Calu3 (cell line): ENCODE measurements at regions of chr2 and their contacts with region 1.

Region 1: GRCh38 chr2:174699993-174700766 is 64.1 kb downstream of the CHRNA1 start:
- DNase-seq: peak; percentile 28
- H3K4me3 Mint-ChIP-seq: no peak overlapping the region
- H3K27ac Mint-ChIP-seq: no peak overlapping the region
- H3K4me1 Mint-ChIP-seq: no peaks in the 10 kb centered on the region
- H3K27me3 Mint-ChIP-seq: peaks cover 60% of the 10 kb centered on the region
- CTCF ChIP-seq: peak; percentile 57

Region 2: DNA sequence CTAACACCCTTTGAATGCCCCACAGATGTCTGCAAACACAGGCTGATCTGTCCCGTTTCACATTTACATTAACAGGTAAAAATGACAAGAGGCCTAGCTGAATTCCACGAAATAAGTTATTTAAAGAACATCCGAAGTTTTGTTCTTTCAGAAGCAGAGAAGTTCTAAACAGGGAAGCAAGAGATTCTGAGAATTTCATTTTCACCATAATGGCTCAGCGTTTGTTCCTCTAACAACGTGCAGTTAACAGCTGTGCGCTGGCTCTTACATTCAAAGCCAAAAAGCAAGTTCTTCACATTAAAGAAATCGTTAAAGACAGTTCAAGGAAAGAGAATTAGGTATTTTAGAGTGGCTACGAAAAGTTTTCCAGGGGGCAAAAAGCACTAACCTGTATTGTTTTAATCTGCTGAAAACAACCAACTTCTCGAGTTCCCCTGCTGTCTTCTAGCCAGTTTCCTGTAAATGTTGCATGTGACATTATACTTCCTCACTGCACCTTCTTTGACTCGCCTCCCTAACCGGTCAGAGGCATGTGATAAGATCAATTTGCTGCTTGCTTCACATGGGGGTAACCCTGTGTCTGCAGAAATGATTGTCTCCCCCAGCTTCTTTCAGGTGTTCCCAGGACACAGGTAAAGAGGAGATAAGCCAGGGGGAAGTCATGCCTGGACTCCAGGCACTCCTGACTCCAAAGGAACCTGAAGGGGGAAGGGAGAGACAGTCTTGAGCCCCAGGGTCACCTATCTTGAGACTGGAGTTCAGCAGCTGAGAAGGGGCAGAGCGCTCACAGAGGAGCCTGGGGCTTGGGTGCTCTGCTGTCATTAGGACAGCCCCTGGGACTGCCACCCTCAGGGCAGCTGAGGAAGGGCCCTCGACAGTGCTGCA is 65.8 kb before region 1 on chr2:
- CTCF ChIA-PET with region 1: no interaction called
- intact Hi-C with region 1: no loop called
- DNase-seq: no peak
- H3K4me3 Mint-ChIP-seq: no peak overlapping the region
- H3K27ac Mint-ChIP-seq: no peak overlapping the region
- H3K4me1 Mint-ChIP-seq: no peaks in the 10 kb centered on the region
- H3K27me3 Mint-ChIP-seq: peaks cover 6% of the 10 kb centered on the region
- CTCF ChIP-seq: no peak

Region 3: DNA sequence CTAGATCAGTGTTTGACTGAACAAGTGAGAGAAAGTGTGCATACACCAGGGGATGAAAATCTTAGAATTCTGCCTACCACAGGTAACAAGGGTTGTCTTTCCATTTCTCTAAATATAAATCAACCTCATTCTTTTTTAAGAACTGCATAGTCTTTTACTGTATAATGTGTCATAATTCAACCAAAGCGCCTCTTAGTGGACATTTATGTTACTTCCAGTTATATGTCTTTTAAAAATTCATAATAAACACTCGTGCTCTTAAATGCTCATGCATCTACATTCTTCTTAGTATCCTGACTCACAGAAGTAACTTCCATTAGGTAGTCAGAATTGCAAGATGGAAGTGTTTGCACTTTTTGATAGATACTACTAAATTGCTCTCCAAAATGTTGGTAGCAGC is 12.1 kb before region 1 on chr2:
- CTCF ChIA-PET with region 1: interaction called, 10 read pairs
- intact Hi-C with region 1: no loop called
- DNase-seq: no peak
- H3K4me3 Mint-ChIP-seq: no peak overlapping the region
- H3K27ac Mint-ChIP-seq: no peak overlapping the region
- H3K4me1 Mint-ChIP-seq: peaks cover 9% of the 10 kb centered on the region
- H3K27me3 Mint-ChIP-seq: peaks cover 70% of the 10 kb centered on the region
- CTCF ChIP-seq: peak; percentile 6

Region 4: GRCh38 chr2:174748948-174749347 is 48.8 kb after region 1 on chr2:
- CTCF ChIA-PET with region 1: interaction called, 9 read pairs
- intact Hi-C with region 1: loop called (anchors 2 kb)
- DNase-seq: peak; percentile 86
- H3K4me3 Mint-ChIP-seq: no peak overlapping the region
- H3K27ac Mint-ChIP-seq: no peak overlapping the region
- H3K4me1 Mint-ChIP-seq: no peaks in the 10 kb centered on the region
- H3K27me3 Mint-ChIP-seq: peaks cover 22% of the 10 kb centered on the region
- CTCF ChIP-seq: peak; percentile 74

Region 5: DNA sequence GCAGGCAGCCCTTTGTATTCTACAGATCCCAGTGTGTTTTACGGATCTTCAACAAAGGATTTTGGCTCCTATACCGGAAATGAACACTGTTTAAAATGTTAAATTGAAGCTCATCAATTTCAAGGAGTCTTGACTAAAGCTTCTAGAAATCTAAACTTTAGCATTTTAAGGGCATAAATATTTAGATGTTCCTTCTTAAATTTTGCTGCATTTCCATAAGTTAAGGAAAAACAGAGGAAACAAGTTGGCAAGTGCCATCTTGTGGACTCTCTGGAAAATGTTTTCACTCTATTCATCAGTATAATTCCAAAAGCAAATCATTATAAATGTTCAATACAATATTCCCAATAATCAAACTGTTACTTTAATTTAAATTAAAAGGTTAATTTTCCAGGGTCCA is 285.4 kb after region 1 on chr2:
- CTCF ChIA-PET with region 1: no interaction called
- intact Hi-C with region 1: loop called (anchors 1 kb)
- DNase-seq: no peak
- H3K4me3 Mint-ChIP-seq: no peak overlapping the region
- H3K27ac Mint-ChIP-seq: no peak overlapping the region
- H3K4me1 Mint-ChIP-seq: no peaks in the 10 kb centered on the region
- H3K27me3 Mint-ChIP-seq: no peaks in the 10 kb centered on the region
- CTCF ChIP-seq: no peak

Region 6: GRCh38 chr2:175282290-175282689 is 582.1 kb after region 1 on chr2:
- CTCF ChIA-PET with region 1: no interaction called
- intact Hi-C with region 1: loop called (anchors 5 kb)
- DNase-seq: no peak
- H3K4me3 Mint-ChIP-seq: no peak overlapping the region
- H3K27ac Mint-ChIP-seq: no peak overlapping the region
- H3K4me1 Mint-ChIP-seq: no peaks in the 10 kb centered on the region
- H3K27me3 Mint-ChIP-seq: peaks cover 25% of the 10 kb centered on the region
- CTCF ChIP-seq: peak; percentile 41